ENCODE measurements at regions of chr16 and their contacts with region 1.

Region 1: GRCh38 chr16:55189682-55190636 is 134.0 kb upstream of the IRX6 start:
- DNase-seq: no peak
- H3K27ac ChIP-seq: no peak overlapping the region
- CTCF ChIP-seq: no peak

Region 2: GRCh38 chr16:54897930-54898329 is 292.0 kb before region 1 on chr16:
- CTCF ChIA-PET with region 1: no interaction called
- POLR2A ChIA-PET with region 1: no interaction called
- DNase-seq: no peak
- H3K27ac ChIP-seq: no peak overlapping the region
- CTCF ChIP-seq: no peak

Region 3: DNA sequence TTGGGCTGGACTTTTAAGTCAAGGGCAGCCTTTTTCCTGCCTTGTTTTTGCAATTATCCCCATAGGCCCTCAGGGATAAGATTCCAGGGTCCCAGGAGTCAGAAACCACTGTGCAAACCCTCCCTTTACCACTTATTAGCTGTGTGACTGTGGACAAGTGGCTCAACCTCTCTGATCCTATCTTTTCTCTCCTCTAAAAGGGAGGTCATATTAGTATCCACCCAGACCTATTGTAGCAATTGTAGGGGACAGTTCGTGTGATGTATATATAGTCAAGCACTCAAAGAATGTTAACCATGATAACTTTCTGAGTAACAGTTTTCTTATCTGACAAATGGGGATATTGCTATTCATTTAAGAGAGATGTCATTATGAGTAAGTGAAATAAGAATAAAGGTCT is 191.1 kb before region 1 on chr16:
- CTCF ChIA-PET with region 1: interaction called, 11 read pairs
- POLR2A ChIA-PET with region 1: no interaction called
- DNase-seq: no peak
- H3K27ac ChIP-seq: no peak overlapping the region
- CTCF ChIP-seq: no peak

Region 4: DNA sequence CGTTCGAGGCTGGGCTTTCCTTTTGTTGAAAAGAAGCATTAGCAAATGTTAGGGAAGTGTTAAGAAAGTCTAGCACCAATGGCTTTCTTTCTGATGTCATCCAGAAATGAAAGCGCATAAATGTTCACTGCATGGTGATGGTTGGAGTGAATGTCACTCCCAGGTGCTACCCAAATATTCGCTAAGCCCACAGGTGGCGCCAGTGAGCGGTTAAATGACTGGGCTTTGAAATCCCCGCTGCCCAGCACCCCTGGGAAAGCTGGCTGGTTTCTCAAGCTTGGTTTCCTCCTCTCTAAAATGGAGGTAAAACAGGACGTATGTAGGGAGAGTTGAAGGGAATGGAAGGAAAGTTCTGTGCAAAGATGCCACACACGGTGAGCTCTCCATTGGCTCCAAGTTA is 154.9 kb before region 1 on chr16:
- CTCF ChIA-PET with region 1: no interaction called
- POLR2A ChIA-PET with region 1: no interaction called
- DNase-seq: no peak
- H3K27ac ChIP-seq: no peak overlapping the region
- CTCF ChIP-seq: 0 out of 2 replicates have a peak, but pooled peaks have one; percentile 10

Region 5: DNA sequence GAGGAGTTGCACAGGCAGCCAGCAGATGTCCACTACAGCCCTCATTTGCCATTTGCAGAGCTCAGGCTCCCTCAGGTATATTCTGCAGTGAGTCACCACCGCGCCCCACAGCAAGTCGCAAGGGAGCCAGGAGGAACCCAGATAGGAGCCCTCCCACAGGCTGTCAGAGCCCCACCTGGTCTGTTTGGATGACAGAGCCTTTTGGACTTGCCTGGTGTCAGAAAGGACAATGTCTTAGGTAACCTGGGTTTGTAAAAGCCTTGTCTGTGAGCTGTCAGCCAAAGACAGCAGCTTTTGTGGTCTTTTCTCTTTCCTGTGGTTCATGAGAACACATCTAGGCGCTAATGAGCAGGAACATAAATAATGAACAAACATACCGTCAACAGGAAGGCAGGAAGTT is 1072.2 kb after region 1 on chr16:
- CTCF ChIA-PET with region 1: no interaction called
- POLR2A ChIA-PET with region 1: no interaction called
- DNase-seq: peak; percentile 40
- H3K27ac ChIP-seq: no peak overlapping the region
- CTCF ChIP-seq: no peak